ENCODE measurements at regions of chr19 and their contacts with region 1.

Region 1: GRCh38 chr19:19098703-19099632 is 35.2 kb downstream of the SLC25A42 start:
- DNase-seq: no peak
- ATAC-seq: no peak
- H3K4me3 ChIP-seq: no peak overlapping the region
- H3K27ac ChIP-seq: peak overlapping the region; percentile 6
- H3K4me1 ChIP-seq: peaks cover 61 to 94% of the 10 kb centered on the region in 2 experiments
- H3K27me3 ChIP-seq: no peaks in the 10 kb centered on the region
- CTCF ChIP-seq: no peak
- POLR2A ChIP-seq: no peak
- RAD21 ChIP-seq: no peak

Region 2: DNA sequence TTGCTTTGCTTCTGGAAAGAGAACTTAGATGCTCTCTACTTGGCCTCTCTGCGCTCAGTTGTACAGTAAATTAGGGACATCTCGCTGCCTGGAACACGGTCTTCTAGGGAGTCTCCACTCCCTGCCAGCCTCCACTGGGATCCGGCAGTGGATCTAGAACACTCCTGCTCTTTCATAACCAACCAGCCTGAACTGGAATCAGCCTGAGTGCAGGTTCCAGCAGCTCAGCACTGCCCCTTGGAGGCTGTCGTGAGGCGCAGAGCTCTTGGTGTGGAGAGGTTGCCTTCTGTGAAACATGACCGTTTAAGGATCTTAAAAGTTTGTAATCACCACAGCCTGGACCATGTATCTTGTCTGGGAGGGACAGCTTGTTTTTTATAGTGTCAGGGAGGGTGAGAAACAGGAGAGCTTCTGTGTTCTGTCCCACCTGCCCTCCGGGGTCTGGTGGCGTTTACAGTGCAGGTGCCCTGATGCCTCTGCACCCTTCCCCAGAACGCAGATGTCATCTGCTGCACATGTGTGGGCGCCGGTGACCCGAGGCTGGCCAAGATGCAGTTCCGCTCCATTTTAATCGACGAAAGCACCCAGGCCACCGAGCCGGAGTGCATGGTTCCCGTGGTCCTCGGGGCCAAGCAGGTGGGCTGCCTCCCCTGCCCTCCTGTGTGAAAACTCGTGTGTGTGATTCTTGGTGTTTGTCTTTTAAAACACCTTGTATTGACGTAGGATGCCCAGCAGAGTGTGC is 242.4 kb before region 1 on chr19:
- CTCF ChIA-PET with region 1: no interaction called
- POLR2A ChIA-PET with region 1: no interaction called
- RAD21 ChIA-PET with region 1: no interaction called
- intact Hi-C with region 1: no loop called
- DNase-seq: no peak
- ATAC-seq: peak; percentile 68
- H3K4me3 ChIP-seq: no peak overlapping the region
- H3K27ac ChIP-seq: no peak overlapping the region
- H3K4me1 ChIP-seq: no peaks in the 10 kb centered on the region; a peak in 1 of 4 replicates
- H3K27me3 ChIP-seq: no peaks in the 10 kb centered on the region
- CTCF ChIP-seq: peak in 2 of 3 experiments; percentile 31 to 40; a peak in 4 of 6 replicates
- POLR2A ChIP-seq: no peak
- RAD21 ChIP-seq: peak; percentile 35

Region 3: DNA sequence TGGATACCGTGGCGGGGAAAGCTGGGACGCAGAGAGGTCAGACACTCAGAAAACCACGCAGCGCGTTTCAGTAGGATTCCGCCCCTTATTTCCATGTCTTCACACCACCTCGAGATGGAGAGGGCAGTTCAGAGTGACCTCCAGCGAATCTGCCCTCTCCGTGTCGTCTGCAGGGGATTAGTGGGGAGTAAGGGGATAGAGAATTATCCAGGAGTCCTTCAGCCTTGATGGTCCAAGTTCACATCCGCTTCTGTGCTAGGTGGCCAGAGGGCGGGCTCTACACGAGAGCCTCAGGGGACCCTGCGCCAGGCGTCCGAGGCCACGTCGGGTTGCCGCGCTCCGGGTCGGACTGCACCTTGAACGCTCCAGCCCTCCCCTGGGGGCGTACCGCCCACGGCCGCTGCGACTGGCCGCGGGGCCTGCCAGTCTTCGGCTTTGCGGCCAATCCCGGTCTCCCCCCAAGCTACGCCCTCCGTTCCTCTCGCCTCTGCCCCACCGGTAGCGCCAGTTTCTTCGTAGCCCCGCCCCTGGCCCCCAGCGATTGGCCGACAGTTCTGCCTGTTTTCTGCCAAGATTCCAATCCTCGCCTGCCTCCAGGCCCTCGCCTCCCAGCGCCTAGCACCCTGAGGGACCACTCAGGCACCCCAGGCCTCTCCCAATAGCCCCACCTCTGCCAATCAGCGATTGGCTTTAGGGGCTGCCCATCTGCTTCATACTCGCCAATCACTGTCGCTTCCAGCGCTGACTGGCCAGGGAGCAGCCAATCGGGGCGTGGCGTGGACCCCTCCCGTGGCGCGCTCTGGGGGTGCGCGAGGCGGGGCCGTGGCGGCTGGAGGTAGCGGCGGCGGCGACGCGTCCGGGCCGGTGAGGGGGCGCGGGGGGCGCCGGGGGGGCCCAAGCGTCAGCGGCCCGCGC is 35.5 kb before region 1 on chr19 and contains the start of gene SLC25A42:
- CTCF ChIA-PET with region 1: no interaction called
- POLR2A ChIA-PET with region 1: no interaction called
- RAD21 ChIA-PET with region 1: interaction called in 1 of 2 experiments, 3 read pairs
- intact Hi-C with region 1: loop called (anchors 2 kb)
- DNase-seq: peak; percentile 99
- ATAC-seq: peak; percentile 96
- H3K4me3 ChIP-seq: peak within 1 kb of the TSS; percentile 64 to 66
- H3K27ac ChIP-seq: peak within 1 kb of the TSS; percentile 47
- H3K4me1 ChIP-seq: peaks cover 20 to 32% of the 10 kb centered on the region in 2 experiments
- H3K27me3 ChIP-seq: no peaks in the 10 kb centered on the region
- CTCF ChIP-seq: no peak
- POLR2A ChIP-seq: no peak
- RAD21 ChIP-seq: no peak
- total RNA-seq, gene SLC25A42: 10.2 TPM

Region 4: DNA sequence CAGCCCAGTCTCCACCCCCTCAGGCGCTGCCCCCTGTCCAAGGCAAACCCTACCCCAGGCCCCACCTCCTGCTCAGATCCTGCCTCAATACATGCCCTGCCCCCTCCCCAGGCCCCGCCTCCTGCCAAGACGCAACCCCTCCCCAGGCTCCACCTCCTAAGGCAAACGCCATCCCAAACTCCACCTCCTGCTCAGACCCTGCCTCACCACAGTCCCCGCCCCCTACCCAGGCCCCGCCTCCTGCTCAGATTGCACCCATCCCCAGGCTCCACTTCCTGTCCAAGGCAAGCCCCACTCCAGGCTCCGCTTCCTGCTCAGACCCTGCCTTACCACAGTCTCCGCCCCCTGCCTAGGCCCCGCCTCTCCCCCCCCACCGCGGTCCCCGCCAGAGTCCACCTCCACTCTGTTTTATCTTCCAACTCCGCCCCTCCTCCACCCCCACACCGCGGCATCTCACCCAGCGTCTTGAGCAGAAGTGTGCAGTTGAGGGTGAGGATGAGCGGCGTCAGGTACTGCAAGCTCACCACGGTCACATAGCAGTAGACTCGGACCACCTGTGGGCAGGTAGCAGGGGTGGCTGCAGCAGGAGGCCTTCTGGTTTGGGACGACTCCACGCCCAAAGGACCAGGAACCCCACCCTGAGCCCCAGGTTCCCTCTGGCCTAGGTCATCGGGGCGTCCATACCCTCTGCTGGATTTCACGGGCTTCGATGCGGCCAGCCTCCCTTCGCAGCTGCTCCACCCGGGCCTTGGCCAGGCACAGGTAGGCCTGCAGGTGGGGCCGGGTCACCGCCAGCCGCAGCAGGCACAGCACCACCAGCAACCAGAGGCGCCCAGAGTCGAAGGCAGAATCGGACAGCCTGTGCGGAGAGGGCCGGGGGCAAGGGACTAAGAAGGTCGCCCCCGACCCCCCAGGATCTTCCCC is 21.6 kb after region 1 on chr19:
- CTCF ChIA-PET with region 1: no interaction called
- POLR2A ChIA-PET with region 1: no interaction called
- RAD21 ChIA-PET with region 1: no interaction called
- intact Hi-C with region 1: no loop called
- DNase-seq: no peak
- ATAC-seq: peak; percentile 86
- H3K4me3 ChIP-seq: no peak overlapping the region
- H3K27ac ChIP-seq: no peak overlapping the region; the same call in 1 of the 2 replicates
- H3K4me1 ChIP-seq: peaks cover 0 to 5% of the 10 kb centered on the region in 2 experiments; a peak in 2 of 4 replicates
- H3K27me3 ChIP-seq: no peaks in the 10 kb centered on the region
- CTCF ChIP-seq: no peak
- POLR2A ChIP-seq: no peak
- RAD21 ChIP-seq: no peak